A549 (cell line): ENCODE measurements at regions of chr2 and their contacts with region 1.

Region 1: DNA sequence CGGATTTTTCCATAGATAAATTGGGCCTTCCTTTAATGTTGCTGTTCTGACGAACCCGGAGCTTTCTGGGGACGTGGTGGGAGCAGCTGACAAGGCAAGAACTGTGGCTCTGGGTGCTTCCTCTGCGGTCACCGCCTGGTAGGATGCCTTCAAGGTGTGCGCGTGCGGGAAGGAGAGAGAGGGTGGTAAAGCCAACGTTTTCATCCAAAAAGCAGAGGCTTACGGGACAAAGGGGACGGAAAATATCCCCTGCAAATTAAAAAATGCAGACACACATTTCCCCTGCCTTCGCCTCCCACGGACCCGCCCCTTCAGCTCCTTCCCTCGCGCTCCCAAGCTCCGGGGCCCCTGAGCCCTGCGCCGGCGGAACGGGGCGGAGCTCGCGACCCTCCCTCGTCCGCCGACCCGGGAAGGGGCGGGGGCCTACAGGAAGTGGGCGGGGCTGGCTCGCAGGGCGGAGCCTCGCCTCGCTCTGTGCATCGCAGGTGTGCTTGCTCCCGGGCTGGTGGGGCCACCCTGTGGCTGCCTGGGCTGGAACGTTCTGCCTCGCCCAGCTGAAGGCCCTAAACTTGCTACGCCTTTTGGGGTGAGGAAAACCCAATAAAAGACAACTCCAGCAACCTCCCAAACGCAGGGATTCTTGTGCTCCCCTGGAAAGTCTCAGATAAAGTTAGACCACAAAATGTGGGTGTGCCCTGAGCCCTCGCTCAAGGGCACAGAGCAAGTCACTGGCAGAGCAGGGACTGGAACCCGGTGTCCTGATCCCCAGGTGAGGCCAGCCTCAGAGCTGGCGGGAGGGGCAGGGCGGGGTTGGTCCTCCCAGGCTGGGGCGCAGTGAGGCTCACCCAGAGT is 25.4 kb upstream of the SLC66A3 start:
- DNase-seq: peak; percentile 59 to 74
- ATAC-seq: peak; percentile 66 to 81
- H3K4me3 ChIP-seq: peak overlapping the region; percentile 45
- H3K27ac ChIP-seq: peak overlapping the region; percentile 67 to 77
- H3K4me1 ChIP-seq: peaks cover 16% of the 10 kb centered on the region; the same call in 2 of the 3 replicates
- CTCF ChIP-seq: peak; percentile 72
- EP300 ChIP-seq: no peak
- POLR2A ChIP-seq: no peak
- RAD21 ChIP-seq: peak; percentile 74 to 86

Region 2: GRCh38 chr2:10812362-10813162 is 317.3 kb before region 1 on chr2 and contains the start of gene PDIA6:
- CTCF ChIA-PET with region 1: interaction called, 36 read pairs
- POLR2A ChIA-PET with region 1: interaction called, 3 read pairs
- DNase-seq: peak; percentile 97
- ATAC-seq: peak; percentile 94 to 98
- H3K4me3 ChIP-seq: peak within 1 kb of the TSS; percentile 85
- H3K27ac ChIP-seq: peak within 1 kb of the TSS; percentile 90 to 93
- H3K4me1 ChIP-seq: peaks cover 18% of the 10 kb centered on the region
- CTCF ChIP-seq: no peak
- EP300 ChIP-seq: no peak
- POLR2A ChIP-seq: peak; percentile 76
- RAD21 ChIP-seq: no peak
- polyA plus RNA-seq, gene PDIA6: 292 and 442 TPM in 2 replicates

Region 3: GRCh38 chr2:11154923-11155380 is 25.1 kb after region 1 on chr2:
- CTCF ChIA-PET with region 1: interaction called, 224 read pairs
- POLR2A ChIA-PET with region 1: interaction called, 17 read pairs
- DNase-seq: peak; percentile 97 to 99
- ATAC-seq: peak; percentile 84 to 85
- H3K4me3 ChIP-seq: peak overlapping the region; percentile 72
- H3K27ac ChIP-seq: peak overlapping the region; percentile 87 to 90
- H3K4me1 ChIP-seq: peaks cover 14% of the 10 kb centered on the region
- CTCF ChIP-seq: no peak
- EP300 ChIP-seq: no peak
- POLR2A ChIP-seq: peak; percentile 78
- RAD21 ChIP-seq: peak in 1 of 2 experiments; percentile 13; a peak in 1 of 5 replicates

Region 4: GRCh38 chr2:11222845-11223244 is 93.0 kb after region 1 on chr2:
- CTCF ChIA-PET with region 1: interaction called, 31 read pairs
- POLR2A ChIA-PET with region 1: no interaction called
- DNase-seq: no peak
- ATAC-seq: no peak
- H3K4me3 ChIP-seq: no peak overlapping the region
- H3K27ac ChIP-seq: no peak overlapping the region
- H3K4me1 ChIP-seq: no peaks in the 10 kb centered on the region
- CTCF ChIP-seq: no peak
- EP300 ChIP-seq: no peak
- POLR2A ChIP-seq: no peak
- RAD21 ChIP-seq: no peak

Region 5: DNA sequence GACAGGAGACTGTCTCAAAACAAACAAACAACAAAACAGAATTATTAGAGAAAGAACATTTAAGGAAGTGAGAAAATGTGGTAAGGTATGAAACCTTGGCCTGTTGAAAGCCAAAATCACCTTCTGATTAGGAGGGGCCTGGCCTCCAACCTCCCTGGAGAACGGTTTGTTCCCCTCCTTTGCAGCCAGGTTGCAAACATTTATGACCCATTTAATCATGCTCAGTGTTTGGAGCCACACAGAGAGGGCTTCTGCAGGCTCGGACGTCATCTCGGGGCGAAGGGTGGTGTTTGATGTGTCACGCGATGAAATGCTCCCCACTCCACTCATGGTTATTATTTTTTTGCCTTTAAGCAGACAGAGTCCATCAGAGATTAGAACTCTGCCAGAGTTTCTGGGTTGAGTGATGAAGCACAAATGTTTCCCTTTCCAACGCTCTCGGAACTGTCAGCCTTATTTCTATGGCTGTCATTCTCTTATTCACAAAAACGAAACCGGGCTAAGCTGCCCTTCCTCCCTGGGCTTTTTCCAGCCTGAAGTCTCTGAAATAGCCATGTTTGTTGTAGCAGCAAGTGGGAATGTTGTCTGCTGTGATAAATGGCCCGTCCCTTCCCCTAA is 248.2 kb after region 1 on chr2:
- CTCF ChIA-PET with region 1: interaction called, 14 read pairs
- POLR2A ChIA-PET with region 1: interaction called, 3 read pairs
- DNase-seq: no peak
- ATAC-seq: no peak
- H3K4me3 ChIP-seq: no peak overlapping the region
- H3K27ac ChIP-seq: peak overlapping the region in 1 of 2 experiments; percentile 50; a peak in 4 of 6 replicates
- H3K4me1 ChIP-seq: peaks cover 40% of the 10 kb centered on the region
- CTCF ChIP-seq: no peak
- EP300 ChIP-seq: no peak
- POLR2A ChIP-seq: no peak
- RAD21 ChIP-seq: no peak

Region 6: GRCh38 chr2:11437602-11438001 is 307.8 kb after region 1 on chr2:
- CTCF ChIA-PET with region 1: interaction called, 21 read pairs
- POLR2A ChIA-PET with region 1: no interaction called
- DNase-seq: no peak
- ATAC-seq: no peak; a peak in 1 of 6 replicates
- H3K4me3 ChIP-seq: no peak overlapping the region
- H3K27ac ChIP-seq: no peak overlapping the region
- H3K4me1 ChIP-seq: no peaks in the 10 kb centered on the region
- CTCF ChIP-seq: no peak
- EP300 ChIP-seq: no peak
- POLR2A ChIP-seq: no peak
- RAD21 ChIP-seq: no peak

Region 7: DNA sequence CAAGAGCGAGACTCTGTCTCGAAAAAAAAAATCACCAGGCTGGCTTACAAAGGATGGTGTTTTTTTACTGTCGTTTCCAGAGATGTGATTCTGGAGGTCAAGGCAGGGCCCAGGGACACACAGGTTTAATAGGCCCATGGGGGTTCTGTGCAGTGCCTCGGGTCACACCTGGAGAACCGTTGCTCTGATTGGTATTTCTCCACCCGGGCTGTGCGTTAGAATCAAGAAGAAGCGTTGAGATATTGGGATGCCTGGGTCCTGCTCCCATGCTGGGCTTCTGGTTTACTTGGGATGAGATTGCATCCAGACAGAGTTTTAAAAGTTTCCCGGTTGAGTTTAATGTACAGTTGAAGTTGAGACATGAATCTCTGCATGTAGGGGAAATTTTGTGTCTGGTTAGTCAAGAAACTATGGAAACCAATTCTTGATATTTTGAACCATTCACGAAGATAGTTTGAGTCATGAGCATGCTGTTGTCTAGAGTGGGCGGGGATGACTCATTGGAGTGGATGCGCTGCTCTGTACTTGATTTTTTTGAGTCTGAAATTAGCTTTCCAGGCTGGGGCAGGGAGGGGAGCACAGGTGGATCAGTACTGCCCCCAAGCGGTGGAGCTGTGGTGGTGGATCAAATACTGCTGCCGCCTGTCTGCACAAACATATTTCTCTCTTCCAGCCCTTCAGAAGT is 454.2 kb after region 1 on chr2:
- CTCF ChIA-PET with region 1: interaction called, 333 read pairs
- POLR2A ChIA-PET with region 1: interaction called, 4 read pairs
- DNase-seq: peak; percentile 86 to 88
- ATAC-seq: peak; percentile 54 to 84
- H3K4me3 ChIP-seq: no peak overlapping the region
- H3K27ac ChIP-seq: peak overlapping the region; percentile 21 to 34; a peak in 4 of 6 replicates
- H3K4me1 ChIP-seq: peaks cover 21% of the 10 kb centered on the region
- CTCF ChIP-seq: peak; percentile 96
- EP300 ChIP-seq: no peak
- POLR2A ChIP-seq: no peak
- RAD21 ChIP-seq: peak; percentile 96 to 98